ENCODE measurements at regions of chr3 and their contacts with region 1.

Region 1: DNA sequence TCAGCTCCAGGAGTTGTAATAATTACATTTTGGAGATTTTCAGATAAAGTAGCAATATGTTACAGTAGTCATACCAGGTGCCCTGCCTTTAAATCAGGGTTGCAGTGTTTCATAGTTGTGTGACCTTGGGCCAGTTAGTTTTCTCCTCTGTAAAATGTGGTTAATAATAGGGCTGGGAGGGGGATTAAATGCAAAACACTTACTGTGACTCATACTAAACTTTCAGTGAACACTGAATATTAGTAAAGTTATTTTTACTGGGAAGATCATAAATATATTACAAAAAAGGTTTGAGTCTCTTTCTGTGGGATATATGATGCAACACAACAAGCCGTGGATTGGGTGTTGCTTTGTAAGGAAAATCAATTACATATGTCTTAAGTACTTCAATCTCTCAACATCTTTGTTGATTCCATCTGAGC is 1.1 kb upstream of the EBLN2 start:
- DNase-seq: no peak
- ATAC-seq: no peak
- H3K4me3 ChIP-seq: no peak overlapping the region
- H3K27ac ChIP-seq: no peak overlapping the region
- H3K4me1 ChIP-seq: peaks cover 14% of the 10 kb centered on the region
- H3K27me3 ChIP-seq: no peaks in the 10 kb centered on the region
- CTCF ChIP-seq: no peak

Region 2: GRCh38 chr3:72938471-72939265 is 121.6 kb before region 1 on chr3:
- intact Hi-C with region 1: loop called (anchors 10 kb)
- DNase-seq: no peak
- ATAC-seq: peak; percentile 89 to 92
- H3K4me3 ChIP-seq: no peak overlapping the region
- H3K27ac ChIP-seq: peak overlapping the region; percentile 16
- H3K4me1 ChIP-seq: peaks cover 5% of the 10 kb centered on the region
- H3K27me3 ChIP-seq: no peaks in the 10 kb centered on the region
- CTCF ChIP-seq: peak; percentile 57

Measured in lower lobe of right lung (tissue), 2 donors.